ENCODE measurements at regions of chr3 and their contacts with region 1.

Region 1: DNA sequence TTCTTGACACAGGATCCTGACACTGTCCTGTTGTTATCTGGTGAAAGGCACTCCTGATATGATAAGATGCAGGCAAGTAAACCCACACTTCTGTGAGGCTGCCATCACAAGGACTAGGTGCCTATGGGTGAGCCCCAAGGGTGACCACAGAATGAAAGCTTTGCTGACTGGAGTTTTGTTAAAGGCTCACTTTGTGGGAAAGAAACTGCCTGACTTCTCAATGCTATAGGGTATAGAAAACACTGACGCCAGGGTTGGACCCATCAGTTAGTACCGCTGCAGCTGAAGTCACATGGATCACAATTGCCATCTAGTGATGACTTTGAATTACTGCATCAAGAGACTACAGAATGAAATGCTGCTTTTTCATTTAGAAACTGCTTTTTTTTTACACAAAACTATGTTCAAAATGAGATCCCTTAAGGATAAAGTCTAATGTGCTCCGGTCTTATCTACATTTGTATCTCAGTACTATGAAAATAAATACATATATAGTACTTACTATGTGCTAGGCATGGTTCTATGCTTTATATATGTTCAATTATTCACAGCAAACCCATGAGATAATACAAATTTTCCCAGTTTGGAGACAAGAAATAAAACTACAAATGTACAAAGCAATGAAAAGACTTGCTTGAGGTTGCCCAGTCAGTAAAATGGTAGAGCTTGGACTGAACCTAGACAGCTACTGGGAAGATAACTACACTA is 64.2 kb upstream of the CMSS1 start:
- DNase-seq: no peak
- ATAC-seq: peak; percentile 83 to 86

Region 2: DNA sequence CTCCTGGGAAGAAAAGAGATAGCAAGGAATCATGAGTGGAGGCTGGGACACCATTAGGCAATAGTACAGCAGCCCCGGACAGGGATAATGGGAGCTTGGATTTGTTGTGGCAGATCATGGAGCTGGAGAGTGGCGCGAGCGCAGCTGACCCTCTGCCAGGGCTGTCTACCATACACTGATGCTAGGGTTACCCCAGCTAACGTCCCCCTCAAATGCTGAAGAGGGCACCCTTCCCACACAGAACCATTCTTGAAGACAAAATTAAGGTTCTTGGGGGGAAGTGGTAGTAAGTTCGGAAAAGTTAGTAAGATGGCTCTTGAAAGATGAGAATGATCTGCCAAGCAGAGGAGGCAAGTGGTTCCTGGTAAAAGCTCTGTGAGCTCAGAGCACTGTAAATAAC is 929.2 kb before region 1 on chr3:
- intact Hi-C with region 1: loop called in 1 of 2 experiments (anchors 10 kb)
- DNase-seq: no peak
- ATAC-seq: no peak

Region 3: GRCh38 chr3:99023590-99024192 is 729.7 kb before region 1 on chr3:
- intact Hi-C with region 1: loop called (anchors 5 to 10 kb)
- DNase-seq: no peak
- ATAC-seq: no peak

Region 4: GRCh38 chr3:99499235-99500158 is 253.9 kb before region 1 on chr3:
- intact Hi-C with region 1: loop called (anchors 5 to 10 kb)
- DNase-seq: peak; percentile 40
- ATAC-seq: peak; percentile 62 to 75

Region 5: DNA sequence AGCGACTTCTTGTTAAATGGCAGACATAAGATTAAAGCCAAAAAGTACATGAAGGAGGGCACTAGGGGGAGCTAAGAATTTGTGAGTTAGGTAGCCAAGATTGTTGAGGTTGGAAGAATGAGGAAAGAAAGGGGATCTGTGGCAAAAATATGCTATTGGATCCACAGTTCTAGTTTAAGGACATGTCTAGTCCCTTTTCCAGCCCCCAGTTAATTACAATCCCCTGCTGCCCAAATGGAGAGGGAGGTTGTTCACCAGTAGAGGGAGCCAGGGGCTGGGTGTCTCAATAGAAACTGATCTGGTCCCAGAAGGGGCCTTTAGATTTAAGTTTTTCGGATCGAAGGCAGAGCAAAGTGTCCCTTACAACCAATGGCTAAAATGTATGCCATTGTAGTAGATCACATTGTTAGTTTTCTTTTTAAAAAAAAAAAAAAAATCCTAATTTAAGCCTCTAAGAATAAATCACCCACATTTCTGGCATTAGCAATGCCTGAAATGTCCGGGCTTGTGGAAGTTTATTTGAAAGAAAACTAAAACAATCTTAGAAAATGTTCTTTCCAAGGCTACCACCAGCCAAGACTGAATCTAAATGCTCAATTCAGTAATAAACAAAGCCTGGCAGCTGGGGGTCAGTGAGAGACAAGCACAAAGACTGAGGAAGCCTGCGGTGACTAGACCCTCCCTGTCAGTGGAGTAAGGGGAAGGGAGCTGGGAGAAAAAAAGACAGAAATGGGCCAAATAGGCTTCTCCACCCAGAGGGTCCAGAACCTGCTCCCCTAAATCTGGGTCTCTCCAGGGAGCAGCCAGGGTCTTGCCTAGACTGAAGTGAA is 107.9 kb before region 1 on chr3:
- intact Hi-C with region 1: loop called in 1 of 2 experiments (anchors 10 kb)
- DNase-seq: no peak
- ATAC-seq: peak; percentile 8 to 35